ENCODE measurements at regions of chr3 and their contacts with region 1.

Region 1: GRCh38 chr3:69013253-69014021 is at the start of gene EOGT:
- DNase-seq: peak; percentile 94 to 97
- ATAC-seq: peak; percentile 91 to 95 (median 94)
- H3K4me3 ChIP-seq: peak within 1 kb of the TSS; percentile 97
- H3K27ac ChIP-seq: peak within 1 kb of the TSS; percentile 100
- H3K4me1 ChIP-seq: peaks cover 29% of the 10 kb centered on the region
- H3K27me3 ChIP-seq: no peaks in the 10 kb centered on the region
- CTCF ChIP-seq: peak; percentile 53
- total RNA-seq, gene EOGT: 13.1 to 33.0 (median 21.4) TPM

Region 2: DNA sequence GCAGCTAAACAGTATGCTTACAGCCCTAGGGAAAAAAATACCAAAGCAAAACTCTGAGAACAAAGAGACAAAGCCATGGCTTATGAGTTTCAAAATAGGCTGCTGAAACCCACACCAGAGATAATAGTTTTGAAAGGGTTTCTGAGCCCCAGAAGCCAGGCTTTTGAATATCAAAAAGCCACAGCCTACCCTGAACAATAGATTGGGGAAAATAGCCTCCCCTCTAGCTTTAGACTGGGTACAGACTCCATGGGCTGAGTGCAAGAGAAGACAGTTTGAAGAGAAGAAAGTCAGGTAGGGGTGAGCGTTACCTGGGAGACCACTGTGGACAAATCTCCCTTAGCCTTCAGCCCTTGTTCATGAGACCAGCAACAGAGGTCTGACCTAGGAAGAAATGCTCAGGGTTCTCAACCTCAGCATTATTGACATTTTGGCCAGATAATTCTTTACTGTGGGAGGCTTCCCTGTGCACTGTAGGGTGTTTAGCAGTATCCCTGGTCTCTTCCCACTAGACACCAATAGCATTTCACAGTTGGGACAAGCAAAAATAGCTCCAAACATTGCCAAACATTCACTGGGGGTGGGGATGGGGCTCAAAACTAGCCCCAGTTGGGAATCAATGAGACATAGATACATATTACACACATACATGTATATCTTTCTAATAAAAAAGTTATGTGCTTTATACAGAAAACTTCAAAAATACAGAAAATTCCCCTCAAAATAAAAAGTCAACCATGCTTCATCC is 69.5 kb before region 1 on chr3:
- intact Hi-C with region 1: no loop called
- DNase-seq: no peak
- ATAC-seq: no peak
- H3K4me3 ChIP-seq: no peak overlapping the region
- H3K27ac ChIP-seq: no peak overlapping the region
- H3K4me1 ChIP-seq: no peaks in the 10 kb centered on the region
- H3K27me3 ChIP-seq: peaks cover 0 to 2% (median 0%) of the 10 kb centered on the region in 3 donors
- CTCF ChIP-seq: no peak

Region 3: DNA sequence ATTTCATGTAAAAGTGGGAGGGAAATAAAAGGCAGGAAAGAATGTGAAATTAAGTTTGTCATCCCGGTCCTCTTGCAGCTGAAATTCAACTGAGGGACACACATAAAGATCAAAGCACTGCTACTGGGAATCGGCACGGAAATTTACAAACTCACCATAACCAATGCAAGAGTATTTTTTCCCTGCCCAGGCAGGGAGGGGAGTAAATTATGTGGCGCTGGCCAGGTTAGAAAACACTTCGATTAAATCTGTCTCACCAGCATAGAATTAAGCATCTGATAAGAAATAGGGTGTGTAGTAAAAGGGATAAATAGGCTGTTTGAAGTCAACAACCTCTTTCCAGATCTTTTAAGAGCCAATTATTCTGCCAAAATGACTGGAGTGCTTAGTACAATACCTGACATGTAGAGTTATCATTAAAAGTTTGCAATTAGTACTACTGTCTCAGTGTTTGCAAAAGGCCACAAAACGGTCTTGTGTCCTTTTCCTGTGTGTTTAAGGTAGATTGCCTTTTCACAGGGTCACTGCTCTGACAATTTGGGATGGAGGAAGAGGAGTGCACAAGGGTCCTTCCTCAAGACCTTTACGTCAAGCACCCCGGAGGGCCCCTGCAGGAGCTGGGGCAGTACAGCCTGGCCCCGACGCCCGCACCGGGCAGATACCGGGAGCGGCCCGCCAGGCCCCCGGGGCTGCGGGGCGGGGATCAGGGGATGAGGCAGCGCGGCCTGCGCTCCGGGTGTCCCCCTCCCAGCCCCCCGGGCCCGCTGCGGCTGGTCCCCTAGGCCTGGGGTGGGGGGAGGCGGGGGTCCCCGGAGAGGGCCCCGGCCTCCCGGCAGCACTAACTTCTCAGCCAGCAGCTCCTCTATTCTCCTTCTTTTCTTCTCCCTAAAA is 66.1 kb after region 1 on chr3:
- intact Hi-C with region 1: loop called in 1 of 2 experiments (anchors 5 kb)
- DNase-seq: peak; percentile 25 to 56
- ATAC-seq: peak; percentile 17 to 44 (median 30)
- H3K4me3 ChIP-seq: peak overlapping the region; percentile 88
- H3K27ac ChIP-seq: peak overlapping the region; percentile 98
- H3K4me1 ChIP-seq: peaks cover 53% of the 10 kb centered on the region
- H3K27me3 ChIP-seq: no peaks in the 10 kb centered on the region
- CTCF ChIP-seq: no peak

Region 4: DNA sequence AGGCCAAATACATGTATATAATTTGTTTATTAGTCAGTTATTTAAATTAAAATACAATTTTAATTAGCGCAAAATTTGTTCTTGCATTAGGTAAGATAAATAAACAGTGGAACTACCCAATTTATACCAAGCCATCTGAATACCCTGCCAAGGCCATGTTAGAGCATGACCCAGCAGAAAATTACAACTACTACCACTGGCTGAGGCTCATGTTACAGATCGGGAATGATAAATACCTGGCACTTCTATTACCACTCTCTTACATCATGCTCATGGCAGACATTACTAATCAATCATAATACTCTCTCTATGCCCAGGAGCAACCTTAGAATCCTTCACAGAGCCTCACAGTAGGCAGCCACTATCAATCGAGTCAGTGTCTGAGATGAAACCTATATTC is 130.2 kb after region 1 on chr3:
- intact Hi-C with region 1: loop called in 1 of 2 experiments (anchors 5 kb)
- DNase-seq: no peak
- ATAC-seq: peak; percentile 92 to 96 (median 94)
- H3K4me3 ChIP-seq: peak overlapping the region; percentile 40
- H3K27ac ChIP-seq: peak overlapping the region; percentile 88
- H3K4me1 ChIP-seq: peaks cover 28% of the 10 kb centered on the region
- H3K27me3 ChIP-seq: no peaks in the 10 kb centered on the region
- CTCF ChIP-seq: no peak

Measured in psoas muscle (tissue), 8 donors.